ENCODE measurements at regions of chr16 and their contacts with region 1.

Region 1: GRCh38 chr16:1929578-1930337 is 11.5 kb upstream of the HS3ST6 start:
- DNase-seq: peak; percentile 85 to 97 (median 92)
- ATAC-seq: peak; percentile 100
- H3K4me3 ChIP-seq: peak overlapping the region; percentile 41
- H3K4me3 Mint-ChIP-seq: peak overlapping the region; percentile 82
- H3K27ac ChIP-seq: no peak overlapping the region
- H3K27ac Mint-ChIP-seq: no peak overlapping the region
- H3K4me1 ChIP-seq: no peaks in the 10 kb centered on the region
- H3K4me1 Mint-ChIP-seq: peaks cover 2% of the 10 kb centered on the region
- H3K27me3 ChIP-seq: peaks cover 0 to 3% of the 10 kb centered on the region in 2 experiments
- H3K27me3 Mint-ChIP-seq: no peaks in the 10 kb centered on the region
- CTCF ChIP-seq: peak; percentile 99

Region 2: GRCh38 chr16:1772736-1773584 is 156.8 kb before region 1 on chr16 and contains the starts of genes EME2 and MRPS34:
- CTCF ChIA-PET with region 1: no interaction called
- POLR2A ChIA-PET with region 1: no interaction called
- intact Hi-C with region 1: loop called (anchors 1 to 10 kb)
- DNase-seq: peak; percentile 54 to 89 (median 78)
- ATAC-seq: peak; percentile 48
- H3K4me3 ChIP-seq: peak within 1 kb of the TSS; percentile 79 to 91
- H3K4me3 Mint-ChIP-seq: peak within 1 kb of the TSS; percentile 96
- H3K27ac ChIP-seq: peak within 1 kb of the TSS; percentile 57 to 66
- H3K27ac Mint-ChIP-seq: peak within 1 kb of the TSS; percentile 96
- H3K4me1 ChIP-seq: peaks cover 30% of the 10 kb centered on the region
- H3K4me1 Mint-ChIP-seq: peaks cover 19% of the 10 kb centered on the region
- H3K27me3 ChIP-seq: no peaks in the 10 kb centered on the region
- H3K27me3 Mint-ChIP-seq: no peaks in the 10 kb centered on the region
- CTCF ChIP-seq: peak; percentile 92
- total RNA-seq, gene EME2: 27.5 to 31.7 TPM
- total RNA-seq, gene MRPS34: 18.9 to 21.4 TPM

Region 3: GRCh38 chr16:1812732-1813163 is 117.0 kb before region 1 on chr16:
- CTCF ChIA-PET with region 1: interaction called, 3 read pairs
- POLR2A ChIA-PET with region 1: no interaction called
- intact Hi-C with region 1: loop called (anchors 1 kb)
- DNase-seq: peak in 8 of 9 experiments; percentile 19 to 66 (median 57)
- ATAC-seq: peak; percentile 98
- H3K4me3 ChIP-seq: no peak overlapping the region
- H3K4me3 Mint-ChIP-seq: no peak overlapping the region
- H3K27ac ChIP-seq: no peak overlapping the region
- H3K27ac Mint-ChIP-seq: no peak overlapping the region
- H3K4me1 ChIP-seq: no peaks in the 10 kb centered on the region
- H3K4me1 Mint-ChIP-seq: peaks cover 12% of the 10 kb centered on the region
- H3K27me3 ChIP-seq: no peaks in the 10 kb centered on the region
- H3K27me3 Mint-ChIP-seq: no peaks in the 10 kb centered on the region
- CTCF ChIP-seq: peak; percentile 47

Region 4: DNA sequence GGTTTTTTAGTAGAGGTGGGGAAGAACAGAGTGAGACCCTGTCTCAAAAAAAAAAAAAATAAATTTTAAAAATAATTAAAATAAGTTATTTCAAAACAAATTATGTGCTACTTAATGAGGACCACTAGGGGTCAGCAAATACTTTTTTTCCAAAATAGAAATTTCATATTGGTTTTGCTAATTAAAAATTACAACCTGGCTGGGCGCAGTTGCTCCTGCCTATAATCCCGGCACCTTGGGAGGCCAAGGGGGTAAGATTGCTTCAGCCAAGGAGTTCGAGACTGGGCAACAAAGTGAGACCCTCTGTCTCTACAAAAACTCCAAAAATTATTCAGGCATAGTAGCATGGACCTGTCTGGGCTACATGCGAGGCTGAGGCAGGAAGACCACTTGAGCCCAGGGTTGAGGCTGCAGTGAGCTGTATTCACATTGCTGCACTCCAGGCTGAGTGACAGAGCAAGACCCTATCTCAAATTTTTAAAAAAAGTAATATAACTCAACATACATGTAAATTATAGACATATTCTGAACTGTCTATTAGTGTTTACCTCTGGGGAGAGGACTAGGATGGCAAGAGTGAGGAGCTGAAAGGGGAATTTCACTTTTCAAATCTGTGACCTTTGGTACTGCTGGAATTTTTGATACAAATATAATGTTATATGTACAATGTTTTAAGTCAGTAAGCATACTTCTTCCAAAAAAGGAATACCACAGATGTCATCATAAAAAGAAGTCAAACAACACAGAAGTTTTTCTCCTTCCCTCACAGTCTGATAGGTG is 65.9 kb before region 1 on chr16:
- CTCF ChIA-PET with region 1: interaction called, 10 read pairs
- POLR2A ChIA-PET with region 1: no interaction called
- intact Hi-C with region 1: loop called (anchors 1 kb)
- DNase-seq: peak in 2 of 9 experiments; percentile 51 to 70
- ATAC-seq: peak; percentile 34
- H3K4me3 ChIP-seq: no peak overlapping the region
- H3K4me3 Mint-ChIP-seq: no peak overlapping the region
- H3K27ac ChIP-seq: no peak overlapping the region
- H3K27ac Mint-ChIP-seq: no peak overlapping the region
- H3K4me1 ChIP-seq: no peaks in the 10 kb centered on the region
- H3K4me1 Mint-ChIP-seq: no peaks in the 10 kb centered on the region
- H3K27me3 ChIP-seq: peaks cover 2 to 8% of the 10 kb centered on the region in 2 experiments
- H3K27me3 Mint-ChIP-seq: peaks cover 11% of the 10 kb centered on the region
- CTCF ChIP-seq: peak; percentile 81

Region 5: GRCh38 chr16:2251483-2252240 is 321.9 kb after region 1 on chr16 and contains the start of gene ECI1:
- CTCF ChIA-PET with region 1: no interaction called
- POLR2A ChIA-PET with region 1: no interaction called
- intact Hi-C with region 1: no loop called
- DNase-seq: peak; percentile 50 to 89 (median 80)
- ATAC-seq: peak; percentile 70
- H3K4me3 ChIP-seq: peak within 1 kb of the TSS; percentile 57 to 64
- H3K4me3 Mint-ChIP-seq: peak within 1 kb of the TSS; percentile 85
- H3K27ac ChIP-seq: peak within 1 kb of the TSS; percentile 64 to 81
- H3K27ac Mint-ChIP-seq: peak within 1 kb of the TSS; percentile 90
- H3K4me1 ChIP-seq: peaks cover 8% of the 10 kb centered on the region
- H3K4me1 Mint-ChIP-seq: peaks cover 10% of the 10 kb centered on the region
- H3K27me3 ChIP-seq: no peaks in the 10 kb centered on the region
- H3K27me3 Mint-ChIP-seq: no peaks in the 10 kb centered on the region
- CTCF ChIP-seq: no peak
- total RNA-seq, gene ECI1: 10.6 to 11.0 TPM